HEK293T (cell line): ENCODE measurements at regions of chr14 and their contacts with region 1.

Region 1: GRCh38 chr14:22766456-22767322 is at the start of gene OXA1L:
- DNase-seq: peak; percentile 92

Region 2: DNA sequence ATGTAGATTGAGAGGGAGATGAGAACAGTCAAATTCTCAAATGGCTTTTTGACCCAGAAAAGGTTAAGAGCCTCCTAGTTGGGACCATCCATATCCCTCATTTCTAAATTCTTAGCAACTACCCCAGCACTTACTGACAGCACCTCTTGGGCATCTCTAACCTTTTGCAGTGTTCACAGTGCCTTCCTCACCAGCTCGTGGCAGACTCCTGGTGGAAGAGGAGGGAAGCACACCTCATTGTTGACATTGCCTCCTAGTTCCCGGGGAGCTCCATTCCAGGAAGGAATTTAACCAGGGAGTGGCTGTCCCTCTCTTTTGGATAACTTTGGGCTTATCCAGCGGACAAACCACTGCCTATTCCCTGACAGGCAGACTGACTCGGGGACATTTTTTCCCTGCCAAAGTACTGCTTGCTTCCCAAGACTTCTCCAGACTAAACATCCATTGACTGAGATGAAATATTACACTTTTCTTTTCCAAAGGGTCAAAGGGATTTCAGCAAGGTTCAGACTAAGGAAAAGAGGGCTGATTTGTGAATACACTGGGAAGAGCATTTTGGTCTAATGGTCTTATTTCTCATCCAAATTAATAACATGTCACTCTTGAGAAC is 113.6 kb before region 1 on chr14:
- CTCF ChIA-PET with region 1: no interaction called
- POLR2A ChIA-PET with region 1: interaction called, 19 read pairs
- DNase-seq: peak; percentile 77

Region 3: DNA sequence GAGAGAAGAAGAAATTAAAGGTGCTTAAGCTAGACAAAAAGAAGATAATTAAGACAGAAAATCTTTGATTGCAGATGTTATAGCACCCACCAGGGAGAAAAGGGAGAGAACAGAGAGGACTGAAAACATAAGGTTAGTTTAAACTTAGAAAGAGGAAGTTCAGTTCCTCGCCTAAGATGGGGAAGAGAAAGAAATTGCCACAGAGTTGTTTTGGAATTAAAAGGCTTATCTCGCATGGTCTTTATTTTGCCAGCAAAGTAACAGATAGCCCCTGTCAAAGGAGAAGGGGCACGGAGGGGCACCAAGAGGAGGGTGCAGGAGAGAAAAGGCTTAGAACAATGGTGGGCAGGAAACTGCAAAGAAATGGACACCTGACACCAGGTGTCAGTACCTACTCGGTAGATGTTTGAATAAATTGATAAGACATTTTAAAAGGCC is 18.0 kb before region 1 on chr14:
- CTCF ChIA-PET with region 1: no interaction called
- POLR2A ChIA-PET with region 1: interaction called, 16 read pairs
- DNase-seq: no peak

Region 4: DNA sequence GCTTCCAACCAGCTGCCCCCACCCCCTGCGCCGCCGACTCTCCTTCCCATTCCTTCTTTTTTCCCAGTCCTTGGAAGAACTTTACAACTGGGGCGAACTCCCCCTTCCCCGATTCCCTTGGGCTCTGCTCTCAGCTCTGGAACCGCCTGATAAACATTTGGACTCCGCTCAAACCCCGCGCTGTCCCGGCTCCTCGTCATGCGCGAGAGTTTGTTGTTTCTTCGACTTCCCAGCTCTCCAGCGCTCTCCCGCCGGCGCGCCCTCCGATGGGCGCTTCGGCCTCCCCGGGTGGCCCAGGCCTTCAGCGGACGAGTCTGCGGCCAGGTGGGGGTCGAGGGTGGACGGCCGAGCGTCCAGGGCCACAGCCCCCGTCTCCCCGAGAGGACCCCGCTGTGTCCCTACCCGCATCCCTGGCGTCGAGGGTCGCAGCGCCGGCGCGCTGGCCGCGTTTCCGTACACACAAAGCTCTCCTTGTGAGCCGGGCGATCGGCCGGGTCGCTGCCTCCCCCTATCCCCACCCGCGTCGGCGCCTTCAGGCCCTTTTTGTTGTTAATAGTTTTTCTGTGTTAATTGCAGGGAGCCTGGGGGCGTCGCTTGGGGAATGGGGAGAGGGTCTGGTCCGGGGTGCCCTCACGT is 70.5 kb after region 1 on chr14:
- CTCF ChIA-PET with region 1: no interaction called
- POLR2A ChIA-PET with region 1: no interaction called
- DNase-seq: no peak

Region 5: GRCh38 chr14:22852940-22853767 is 86.5 kb after region 1 on chr14:
- CTCF ChIA-PET with region 1: interaction called, 4 read pairs
- POLR2A ChIA-PET with region 1: interaction called, 11 read pairs
- DNase-seq: peak; percentile 84